ENCODE measurements at regions of chrX and their contacts with region 1.

Region 1: GRCh38 chrX:98480606-98481005 is 1596.9 kb downstream of the RPA4 start:
- DNase-seq: peak; percentile 45
- H3K4me3 Mint-ChIP-seq: no peak overlapping the region
- H3K27ac Mint-ChIP-seq: no peak overlapping the region
- H3K4me1 Mint-ChIP-seq: no peaks in the 10 kb centered on the region
- H3K27me3 Mint-ChIP-seq: no peaks in the 10 kb centered on the region
- CTCF ChIP-seq: no peak

Region 2: DNA sequence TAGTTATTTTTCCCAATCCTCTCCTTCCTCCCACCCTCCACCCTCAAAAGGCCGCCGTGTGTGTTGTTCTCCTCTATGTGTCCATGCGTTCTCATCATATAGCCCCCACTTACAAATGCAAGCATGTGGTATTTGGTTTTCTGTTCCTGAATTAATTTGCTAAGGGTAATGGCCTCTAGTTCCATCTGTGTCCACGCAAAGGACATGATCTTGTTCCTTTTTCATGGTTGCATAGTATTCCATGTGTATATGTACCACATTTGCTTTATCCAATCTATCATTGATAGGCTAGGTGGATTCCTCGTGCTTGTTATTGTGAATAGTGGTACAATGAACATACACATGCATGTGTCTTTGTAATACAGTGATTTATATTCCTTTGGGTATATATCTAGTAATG is 403.2 kb before region 1 on chrX:
- CTCF ChIA-PET with region 1: no interaction called
- POLR2A ChIA-PET with region 1: no interaction called
- intact Hi-C with region 1: loop called (anchors 10 kb)
- DNase-seq: no peak
- H3K4me3 Mint-ChIP-seq: no peak overlapping the region
- H3K27ac Mint-ChIP-seq: no peak overlapping the region
- H3K4me1 Mint-ChIP-seq: no peaks in the 10 kb centered on the region
- H3K27me3 Mint-ChIP-seq: peaks cover 40% of the 10 kb centered on the region
- CTCF ChIP-seq: no peak

Region 3: DNA sequence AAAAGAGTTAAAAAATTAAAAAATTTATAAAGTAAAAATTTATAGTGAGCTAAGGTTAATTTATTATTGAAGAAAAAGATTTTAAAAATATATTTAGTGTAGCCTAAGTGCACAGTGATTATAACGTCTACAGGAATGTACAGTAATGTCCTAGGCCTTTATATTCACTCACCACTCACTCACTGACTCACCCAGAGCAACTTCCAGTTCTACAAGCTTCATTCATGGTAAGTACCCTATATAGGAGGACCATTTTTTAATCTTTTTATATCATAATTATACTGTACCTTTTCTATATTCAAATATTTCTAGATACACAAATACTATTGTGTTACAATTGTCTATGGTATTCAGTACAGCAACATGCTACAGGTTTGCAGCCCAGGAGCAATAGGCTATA is 26.3 kb after region 1 on chrX:
- CTCF ChIA-PET with region 1: no interaction called
- POLR2A ChIA-PET with region 1: no interaction called
- intact Hi-C with region 1: no loop called
- DNase-seq: no peak
- H3K4me3 Mint-ChIP-seq: no peak overlapping the region
- H3K27ac Mint-ChIP-seq: no peak overlapping the region
- H3K4me1 Mint-ChIP-seq: no peaks in the 10 kb centered on the region
- H3K27me3 Mint-ChIP-seq: peaks cover 14% of the 10 kb centered on the region
- CTCF ChIP-seq: no peak

Measured in MCF 10A (cell line).